ENCODE measurements at regions of chr6 and their contacts with region 1.

Region 1: GRCh38 chr6:136503303-136504029 is 46.8 kb downstream of the MAP7 start:
- DNase-seq: no peak
- ATAC-seq: no peak
- H3K4me3 ChIP-seq: no peak overlapping the region
- H3K27ac ChIP-seq: no peak overlapping the region
- H3K4me1 ChIP-seq: no peaks in the 10 kb centered on the region
- H3K27me3 ChIP-seq: no peaks in the 10 kb centered on the region

Region 2: DNA sequence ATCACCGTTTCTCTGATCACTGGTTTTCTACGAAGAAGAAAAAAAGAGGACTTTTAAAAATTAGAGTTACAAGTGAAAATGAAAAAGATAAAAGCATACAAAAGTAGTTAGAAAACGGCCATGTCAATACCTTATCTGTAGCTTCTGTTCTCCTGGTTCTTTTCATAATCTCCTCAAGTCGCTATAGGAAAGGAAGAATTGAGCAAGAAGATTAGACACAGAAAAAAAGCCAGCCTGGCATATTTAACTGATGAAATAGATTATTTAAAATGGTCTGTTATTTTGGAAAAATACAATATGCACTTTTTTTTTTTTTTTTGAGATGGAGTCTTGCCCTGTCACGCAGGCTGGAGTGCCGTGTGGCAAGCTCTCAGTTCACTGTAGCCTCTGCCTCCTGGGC is 143.6 kb before region 1 on chr6:
- intact Hi-C with region 1: loop called in 1 of 4 experiments (anchors 5 kb)
- DNase-seq: no peak
- ATAC-seq: no peak
- H3K4me3 ChIP-seq: no peak overlapping the region
- H3K27ac ChIP-seq: no peak overlapping the region
- H3K4me1 ChIP-seq: no peaks in the 10 kb centered on the region
- H3K27me3 ChIP-seq: no peaks in the 10 kb centered on the region

Region 3: DNA sequence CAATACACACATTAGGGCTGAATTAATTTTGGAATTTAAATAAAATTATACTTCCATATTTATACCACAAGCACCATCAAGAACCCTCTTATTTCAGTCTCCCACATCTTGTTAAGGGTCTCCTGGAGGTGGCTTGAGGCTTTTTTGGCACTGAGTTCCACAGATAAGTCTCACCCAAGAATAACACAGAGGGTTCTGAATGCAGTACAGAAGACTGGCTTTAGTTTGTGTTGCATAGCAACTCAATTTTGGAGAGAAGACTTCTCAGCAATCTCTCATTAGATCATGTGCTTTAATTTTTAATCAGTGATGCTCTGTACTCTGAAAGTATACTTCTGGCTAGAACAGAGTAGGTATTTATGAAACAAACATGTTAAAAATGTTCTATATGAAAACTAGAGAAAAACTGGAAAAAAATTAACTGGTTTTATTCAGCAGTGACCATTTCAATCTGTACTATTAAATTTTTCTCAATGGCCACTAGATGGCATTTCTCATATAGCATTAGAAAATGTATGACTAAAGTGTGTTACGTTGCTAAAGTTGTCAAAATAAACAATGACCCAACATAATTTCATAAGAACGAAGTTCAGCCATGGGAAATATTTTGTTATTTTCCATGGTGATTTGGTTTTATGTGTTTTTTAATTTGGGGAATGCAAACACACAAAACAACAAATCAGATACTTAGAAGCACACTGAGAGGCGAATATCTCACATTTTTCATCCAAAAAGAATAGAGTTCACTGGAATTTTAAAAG is 79.4 kb after region 1 on chr6:
- intact Hi-C with region 1: no loop called
- DNase-seq: no peak
- ATAC-seq: peak; percentile 29 to 51
- H3K4me3 ChIP-seq: no peak overlapping the region
- H3K27ac ChIP-seq: no peak overlapping the region
- H3K4me1 ChIP-seq: no peaks in the 10 kb centered on the region
- H3K27me3 ChIP-seq: no peaks in the 10 kb centered on the region